Activated T-helper 2 cell treated with anti-CD3 and anti-CD28 coated beads, Interferon-gamma antibody, Interleukin-2, Interleukin-4, amounts not matched to agents 10 μg/mL and 5 μg/mL and 100 μg/mL, durations not matched to agents 14 hours and 24 hours and 36 hours (primary cell): ENCODE measurements at regions of chr12 and their contacts with region 1.

Region 1: GRCh38 chr12:56724972-56725722 is at the start of gene NACA:
- DNase-seq: peak; percentile 98
- H3K4me3 Mint-ChIP-seq: peak within 1 kb of the TSS; percentile 96
- H3K27ac Mint-ChIP-seq: peak within 1 kb of the TSS; percentile 96
- H3K4me1 Mint-ChIP-seq: peaks cover 39% of the 10 kb centered on the region
- H3K27me3 Mint-ChIP-seq: no peaks in the 10 kb centered on the region
- total RNA-seq, gene NACA: 1,037 and 1,093 TPM in 2 replicates

Region 2: DNA sequence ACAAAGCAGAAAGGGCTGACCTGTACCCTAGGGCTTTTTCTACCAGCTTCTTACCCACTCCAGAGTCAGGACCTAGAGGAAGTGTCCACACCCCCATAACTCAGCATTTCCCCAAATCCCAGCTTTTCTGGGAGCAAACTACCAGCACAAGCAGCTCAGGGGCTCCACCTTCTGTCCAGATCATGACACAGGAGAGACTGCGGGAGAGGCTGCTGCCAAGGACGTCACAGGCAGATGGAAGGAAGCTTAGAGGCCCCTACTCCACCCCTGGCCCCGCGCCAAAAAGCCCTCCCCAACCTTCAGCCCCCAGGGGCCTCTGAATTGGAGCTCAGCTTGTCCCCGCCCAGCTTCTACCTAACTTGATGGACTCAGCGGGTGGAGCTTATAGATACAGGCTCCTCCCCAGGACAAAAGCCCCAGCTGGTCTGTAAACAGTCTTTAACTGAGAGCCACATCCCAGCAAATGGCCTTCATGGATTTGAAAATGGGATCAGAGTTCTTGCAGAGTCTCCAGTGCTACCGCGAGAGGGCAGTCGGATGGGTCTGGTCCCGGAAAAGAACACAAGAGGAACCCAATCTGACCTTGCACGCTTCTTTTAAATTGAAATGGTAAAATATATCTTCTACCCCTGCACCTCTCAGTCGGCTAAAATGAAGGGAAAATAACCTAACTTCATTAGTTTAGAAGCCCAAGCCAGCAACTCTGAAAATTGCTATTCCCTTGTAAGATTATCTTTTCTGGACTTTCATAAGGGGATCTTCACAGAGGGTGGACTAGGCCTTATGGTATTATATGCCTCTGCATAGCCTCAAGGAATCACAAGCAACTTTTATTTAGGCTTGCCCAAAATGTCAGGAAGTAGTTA is 88.2 kb before region 1 on chr12:
- intact Hi-C with region 1: loop called (anchors 2 kb)
- DNase-seq: peak; percentile 87
- H3K4me3 Mint-ChIP-seq: peak overlapping the region; percentile 97
- H3K27ac Mint-ChIP-seq: peak overlapping the region; percentile 93
- H3K4me1 Mint-ChIP-seq: peaks cover 47% of the 10 kb centered on the region
- H3K27me3 Mint-ChIP-seq: no peaks in the 10 kb centered on the region

Region 3: GRCh38 chr12:56688129-56688845 is 36.9 kb before region 1 on chr12 and contains the start of gene PTGES3:
- intact Hi-C with region 1: loop called (anchors 1 kb)
- DNase-seq: peak; percentile 99
- H3K4me3 Mint-ChIP-seq: peak within 1 kb of the TSS; percentile 100
- H3K27ac Mint-ChIP-seq: peak within 1 kb of the TSS; percentile 98
- H3K4me1 Mint-ChIP-seq: peaks cover 20% of the 10 kb centered on the region
- H3K27me3 Mint-ChIP-seq: no peaks in the 10 kb centered on the region
- total RNA-seq, gene PTGES3: 293 and 298 TPM in 2 replicates

Region 4: DNA sequence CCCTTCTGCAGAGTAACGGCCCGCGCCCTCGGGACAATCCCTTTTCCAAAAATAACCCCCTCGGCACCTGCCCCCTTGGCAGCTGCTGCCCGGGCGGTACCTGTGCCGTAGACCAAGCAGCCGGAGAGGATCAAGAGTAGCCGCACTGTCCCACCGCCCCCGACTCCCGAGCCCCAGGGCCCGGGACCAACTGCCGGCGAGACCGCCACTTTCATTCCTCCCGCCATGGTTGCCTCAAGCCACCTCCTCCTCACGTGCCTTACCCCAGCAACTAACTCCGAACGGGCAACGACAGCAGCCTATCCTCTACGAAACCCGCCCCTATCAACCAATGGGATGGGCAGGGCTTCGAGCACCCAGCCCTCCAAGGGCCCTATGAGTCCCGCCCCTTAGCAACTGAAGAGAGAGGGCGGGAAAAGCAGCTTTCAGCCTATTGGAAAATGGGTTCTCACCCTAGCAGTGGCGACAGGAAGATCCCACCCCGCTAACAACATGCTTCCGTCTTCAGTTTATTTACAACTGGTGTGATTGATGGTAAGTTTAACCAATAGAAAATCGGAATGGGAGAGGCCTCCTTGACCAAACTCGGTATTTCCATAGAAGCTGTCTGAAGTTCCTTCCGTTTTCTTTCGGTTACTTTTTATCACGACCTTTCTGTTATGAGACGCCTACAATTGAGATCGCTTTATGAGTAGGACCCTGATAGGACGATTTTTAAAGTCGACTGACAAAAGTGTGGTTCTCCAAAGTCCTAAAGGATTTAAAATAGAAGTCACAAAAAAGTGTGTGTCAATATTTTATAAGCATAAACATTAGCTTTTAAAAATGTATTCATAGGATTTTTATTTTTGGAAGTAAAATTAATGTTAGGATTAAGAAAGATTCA is 353.6 kb after region 1 on chr12 and contains the start of gene NEMP1:
- intact Hi-C with region 1: loop called (anchors 2 kb)
- DNase-seq: peak; percentile 97
- H3K4me3 Mint-ChIP-seq: peak within 1 kb of the TSS; percentile 100
- H3K27ac Mint-ChIP-seq: peak within 1 kb of the TSS; percentile 98
- H3K4me1 Mint-ChIP-seq: peaks cover 27% of the 10 kb centered on the region
- H3K27me3 Mint-ChIP-seq: no peaks in the 10 kb centered on the region
- total RNA-seq, gene NEMP1: 79.8 and 86.7 TPM in 2 replicates

Region 5: GRCh38 chr12:57111031-57111734 is 386.0 kb after region 1 on chr12 and contains the start of gene STAT6:
- intact Hi-C with region 1: loop called (anchors 5 kb)
- DNase-seq: peak; percentile 83
- H3K4me3 Mint-ChIP-seq: peak within 1 kb of the TSS; percentile 94
- H3K27ac Mint-ChIP-seq: peak within 1 kb of the TSS; percentile 95
- H3K4me1 Mint-ChIP-seq: peaks cover 37% of the 10 kb centered on the region
- H3K27me3 Mint-ChIP-seq: peaks cover under 1% of the 10 kb centered on the region
- total RNA-seq, gene STAT6: 333 and 341 TPM in 2 replicates